Colonic mucosa (tissue), 4 donors: ENCODE measurements at regions of chr11 and their contacts with region 1.

Region 1: GRCh38 chr11:56027354-56027753 is at the start of gene OR5AS1:
- DNase-seq: no peak
- H3K4me3 ChIP-seq: no peak within 1 kb of the TSS
- H3K27ac ChIP-seq: no peak within 1 kb of the TSS
- H3K4me1 ChIP-seq: no peaks in the 10 kb centered on the region
- H3K27me3 ChIP-seq: no peaks in the 10 kb centered on the region
- CTCF ChIP-seq: no peak
- total RNA-seq, gene OR5AS1: not detected

Region 2: DNA sequence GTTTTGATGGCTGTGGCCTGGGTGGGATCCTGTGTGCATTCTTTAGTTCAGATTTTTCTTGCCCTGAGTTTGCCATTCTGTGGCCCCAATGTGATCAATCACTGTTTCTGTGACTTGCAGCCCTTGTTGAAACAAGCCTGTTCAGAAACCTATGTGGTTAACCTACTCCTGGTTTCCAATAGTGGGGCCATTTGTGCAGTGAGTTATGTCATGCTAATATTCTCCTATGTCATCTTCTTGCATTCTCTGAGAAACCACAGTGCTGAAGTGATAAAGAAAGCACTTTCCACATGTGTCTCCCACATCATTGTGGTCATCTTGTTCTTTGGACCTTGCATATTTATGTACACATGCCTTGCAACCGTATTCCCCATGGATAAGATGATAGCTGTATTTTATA is 454.8 kb before region 1 on chr11:
- intact Hi-C with region 1: no loop called
- DNase-seq: no peak
- H3K4me3 ChIP-seq: no peak overlapping the region
- H3K27ac ChIP-seq: no peak overlapping the region
- H3K4me1 ChIP-seq: no peaks in the 10 kb centered on the region
- H3K27me3 ChIP-seq: no peaks in the 10 kb centered on the region
- CTCF ChIP-seq: no peak

Region 3: GRCh38 chr11:56453521-56453920 is 426.2 kb after region 1 on chr11:
- intact Hi-C with region 1: loop called (anchors 10 kb)
- DNase-seq: no peak
- H3K4me3 ChIP-seq: no peak overlapping the region
- H3K27ac ChIP-seq: no peak overlapping the region
- H3K4me1 ChIP-seq: no peaks in the 10 kb centered on the region
- H3K27me3 ChIP-seq: no peaks in the 10 kb centered on the region
- CTCF ChIP-seq: no peak